Naive thymus-derived CD4-positive, alpha-beta T cell (primary cell): ENCODE measurements at regions of chr4 and their contacts with region 1.

Region 1: GRCh38 chr4:2262143-2262943 is 434 bp upstream of the MXD4 start:
- DNase-seq: peak; percentile 95 to 99 (median 98)
- ATAC-seq: peak; percentile 93
- H3K4me3 ChIP-seq: peak overlapping the region; percentile 69
- H3K4me3 Mint-ChIP-seq: peak overlapping the region; percentile 61 to 85 (median 76)
- H3K27ac ChIP-seq: peak overlapping the region; percentile 95
- H3K27ac Mint-ChIP-seq: peak overlapping the region; percentile 61 to 87 (median 83)
- H3K4me1 ChIP-seq: peaks cover 8 to 23% of the 10 kb centered on the region in 2 donors
- H3K4me1 Mint-ChIP-seq: peaks cover 0 to 11% (median 0%) of the 10 kb centered on the region in 7 donors
- H3K27me3 ChIP-seq: no peaks in the 10 kb centered on the region
- H3K27me3 Mint-ChIP-seq: no peaks in the 10 kb centered on the region

Region 2: DNA sequence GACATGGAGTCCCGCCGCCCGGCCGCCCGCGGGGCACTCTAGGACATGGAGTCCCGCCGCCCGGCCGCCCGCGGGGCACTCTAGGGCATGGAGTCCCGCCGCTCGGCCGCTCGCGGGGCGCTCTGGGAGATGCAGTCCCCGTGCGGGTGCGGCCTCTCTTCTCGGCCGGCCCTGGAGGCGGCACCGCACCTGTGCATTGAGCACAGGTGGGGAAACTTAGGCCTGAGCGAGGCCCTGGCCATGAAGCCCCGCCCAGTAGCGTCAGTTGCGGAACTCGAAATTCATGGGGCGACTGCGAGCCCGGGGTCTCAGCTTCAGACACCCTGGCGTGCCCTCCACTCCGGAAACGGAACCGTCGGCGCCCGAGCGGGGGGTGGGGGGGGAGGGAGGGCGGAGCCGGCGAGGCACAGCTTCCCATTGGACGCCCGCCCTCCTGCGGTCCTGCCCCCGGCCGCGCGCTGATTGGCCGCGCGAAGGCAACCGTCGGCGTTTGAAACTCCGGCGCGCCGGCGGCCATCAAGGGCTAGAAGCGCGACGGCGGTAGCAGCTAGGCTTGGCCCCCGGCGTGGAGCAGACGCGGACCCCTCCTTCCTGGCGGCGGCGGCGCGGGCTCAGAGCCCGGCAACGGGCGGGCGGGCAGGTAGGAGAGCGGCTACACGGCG is 541.2 kb before region 1 on chr4 and contains the starts of genes TACC3 and TMEM129:
- CTCF ChIA-PET with region 1: no interaction called
- POLR2A ChIA-PET with region 1: interaction called, 3 read pairs
- intact Hi-C with region 1: loop called (anchors 2 kb)
- DNase-seq: peak; percentile 79 to 97 (median 95)
- ATAC-seq: peak; percentile 92
- H3K4me3 ChIP-seq: peak within 1 kb of the TSS; percentile 70
- H3K4me3 Mint-ChIP-seq: peak within 1 kb of the TSS; percentile 79 to 97 (median 93)
- H3K27ac ChIP-seq: peak within 1 kb of the TSS; percentile 88
- H3K27ac Mint-ChIP-seq: peak within 1 kb of the TSS; percentile 98 to 100 (median 99)
- H3K4me1 ChIP-seq: peaks cover 45 to 52% of the 10 kb centered on the region in 2 donors
- H3K4me1 Mint-ChIP-seq: peaks cover 25 to 56% (median 52%) of the 10 kb centered on the region in 7 donors
- H3K27me3 ChIP-seq: no peaks in the 10 kb centered on the region
- H3K27me3 Mint-ChIP-seq: no peaks in the 10 kb centered on the region
- total RNA-seq, gene TACC3: 100 to 165 (median 162) TPM
- total RNA-seq, gene TMEM129: 20.0 to 41.1 (median 26.7) TPM

Region 3: DNA sequence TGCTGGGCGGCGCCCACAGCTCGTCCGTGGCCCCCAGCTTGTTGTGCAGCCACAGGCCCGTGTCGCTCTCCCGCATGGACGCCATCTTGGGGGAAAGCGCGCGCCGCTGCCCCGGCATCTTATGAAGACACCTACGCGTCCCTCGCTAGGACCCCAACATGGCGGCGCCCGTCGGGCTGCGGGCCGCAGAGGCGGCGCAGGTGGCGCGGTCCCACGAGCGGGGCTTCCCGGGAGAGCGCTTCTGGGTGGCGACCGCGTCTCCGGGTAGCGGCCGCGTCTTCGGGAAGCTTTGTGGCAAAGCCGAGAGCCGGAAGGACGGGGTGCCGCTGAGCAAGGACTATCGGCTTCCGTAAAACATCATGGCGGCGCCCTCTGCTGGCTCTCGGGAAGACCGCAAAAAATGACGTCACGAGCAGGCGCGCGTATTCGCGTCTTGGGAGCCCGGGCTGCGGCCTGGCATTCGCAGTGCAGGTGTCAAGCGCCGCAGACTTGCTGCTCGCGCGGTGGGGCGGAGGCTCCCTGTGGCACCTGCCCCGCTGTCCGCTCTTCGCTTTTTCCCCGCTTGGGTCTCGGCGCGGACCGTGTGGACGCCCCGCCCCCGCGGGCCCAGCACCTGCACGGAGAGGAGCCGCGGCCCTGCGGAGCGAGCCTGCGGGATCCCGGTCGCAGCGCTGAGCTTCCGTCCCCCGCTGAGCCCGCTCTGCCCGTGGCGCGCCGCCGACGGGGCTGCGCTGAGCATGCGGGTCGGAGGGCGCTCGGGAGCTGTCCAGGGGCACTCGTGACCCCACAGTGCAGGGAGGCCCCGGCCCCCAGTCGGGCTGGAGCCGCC is 253.3 kb before region 1 on chr4 and contains the start of gene NELFA:
- CTCF ChIA-PET with region 1: no interaction called
- POLR2A ChIA-PET with region 1: interaction called, 4 read pairs
- intact Hi-C with region 1: loop called in 1 of 2 experiments (anchors 1 kb)
- DNase-seq: peak; percentile 92 to 98 (median 96)
- ATAC-seq: peak; percentile 93
- H3K4me3 ChIP-seq: peak within 1 kb of the TSS; percentile 96
- H3K4me3 Mint-ChIP-seq: peak within 1 kb of the TSS; percentile 81 to 96 (median 94)
- H3K27ac ChIP-seq: peak within 1 kb of the TSS; percentile 99
- H3K27ac Mint-ChIP-seq: peak within 1 kb of the TSS; percentile 91 to 99 (median 96)
- H3K4me1 ChIP-seq: peaks cover 13 to 24% of the 10 kb centered on the region in 2 donors
- H3K4me1 Mint-ChIP-seq: peaks cover 30 to 38% (median 34%) of the 10 kb centered on the region in 7 donors
- H3K27me3 ChIP-seq: no peaks in the 10 kb centered on the region
- H3K27me3 Mint-ChIP-seq: peaks cover 0 to 20% (median 0%) of the 10 kb centered on the region in 5 donors
- total RNA-seq, gene NELFA: 32.7 to 50.1 (median 43.6) TPM

Region 4: DNA sequence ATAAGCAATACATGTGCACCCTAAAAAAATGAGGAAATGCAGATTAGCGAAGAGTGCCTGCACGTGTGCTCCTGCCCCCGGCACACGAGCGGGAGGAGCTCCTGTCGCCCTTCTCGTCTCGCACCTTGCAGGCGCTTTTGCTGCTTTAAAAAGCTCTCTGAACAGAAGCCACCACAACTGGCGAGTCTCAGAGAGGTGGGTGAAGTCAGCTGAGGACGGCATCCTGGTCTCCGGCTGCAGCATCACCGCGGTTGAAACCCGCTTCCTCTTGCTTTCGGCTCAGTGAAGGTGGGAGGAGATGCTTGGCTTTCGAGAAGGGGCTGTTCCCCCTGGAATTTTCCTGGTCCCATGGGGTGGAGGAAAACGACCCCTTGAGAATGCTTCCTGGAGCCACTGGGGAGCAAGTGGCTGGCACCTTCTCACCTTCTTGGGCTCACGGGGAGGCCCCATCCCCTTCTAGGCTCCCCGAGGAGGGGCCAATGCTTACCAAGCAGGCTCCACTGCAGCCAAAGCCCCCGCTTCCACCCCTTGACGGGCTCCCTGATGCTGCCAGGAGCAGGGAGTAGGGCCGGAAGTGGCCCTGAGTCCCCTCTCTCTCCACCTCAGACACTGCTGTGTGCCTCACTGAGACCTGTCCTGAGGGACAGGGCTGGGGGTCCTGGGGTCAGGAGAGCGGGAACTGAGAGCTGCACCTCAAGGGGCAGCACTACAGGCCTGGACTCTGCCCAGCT is 28.8 kb after region 1 on chr4:
- CTCF ChIA-PET with region 1: interaction called, 3 read pairs
- POLR2A ChIA-PET with region 1: interaction called, 22 read pairs
- intact Hi-C with region 1: loop called (anchors 1 to 2 kb)
- DNase-seq: peak; percentile 39 to 89 (median 84)
- ATAC-seq: peak; percentile 94
- H3K4me3 ChIP-seq: peak overlapping the region; percentile 8
- H3K4me3 Mint-ChIP-seq: peak overlapping the region; percentile 77 to 91 (median 86)
- H3K27ac ChIP-seq: peak overlapping the region; percentile 81
- H3K27ac Mint-ChIP-seq: peak overlapping the region; percentile 84 to 99 (median 99)
- H3K4me1 ChIP-seq: peaks cover 25 to 42% of the 10 kb centered on the region in 2 donors
- H3K4me1 Mint-ChIP-seq: peaks cover 14 to 72% (median 43%) of the 10 kb centered on the region in 7 donors
- H3K27me3 ChIP-seq: no peaks in the 10 kb centered on the region
- H3K27me3 Mint-ChIP-seq: peaks cover 0 to 5% (median 0%) of the 10 kb centered on the region in 5 donors

Region 5: DNA sequence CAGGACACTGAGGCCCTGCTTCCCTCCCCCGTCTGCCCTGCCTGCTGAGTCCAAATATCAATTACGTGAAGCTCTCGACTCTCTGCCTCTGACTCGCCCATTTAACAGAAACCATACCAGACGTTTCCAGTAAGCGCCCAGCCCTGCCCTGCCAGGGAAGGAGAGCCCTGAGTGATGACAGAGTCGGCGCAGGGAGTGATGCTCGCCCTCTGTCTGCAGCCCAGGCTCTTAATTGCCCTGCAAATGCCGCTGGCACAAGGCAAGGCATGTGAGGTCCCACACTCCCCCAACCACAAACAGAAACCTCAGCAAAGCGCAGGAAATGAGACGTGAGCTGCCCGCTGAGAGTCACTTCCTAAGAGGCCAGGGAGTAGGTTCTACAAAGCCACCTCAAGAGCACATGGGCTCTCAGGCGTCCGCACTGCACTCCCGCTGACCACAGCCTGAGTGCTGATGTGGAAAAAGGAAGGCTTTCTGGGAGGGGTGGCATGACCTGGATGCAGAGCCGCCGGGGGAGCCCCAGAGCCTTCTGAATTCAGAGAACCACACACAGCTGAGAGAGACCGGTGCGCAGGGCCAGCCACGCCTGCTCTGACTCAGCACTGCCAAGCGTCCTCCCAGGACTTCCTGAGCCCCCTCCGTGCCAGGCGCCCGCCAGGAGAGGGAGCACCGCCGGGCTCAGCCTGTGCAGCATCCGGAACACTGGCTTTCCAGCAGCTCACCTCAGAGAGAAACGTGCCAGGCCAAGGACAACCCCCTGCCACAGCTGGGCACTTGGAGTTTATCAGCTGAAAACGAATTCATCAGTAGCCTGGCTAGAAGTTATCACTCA is 150.8 kb after region 1 on chr4:
- CTCF ChIA-PET with region 1: interaction called, 5 read pairs
- POLR2A ChIA-PET with region 1: interaction called, 14 read pairs
- intact Hi-C with region 1: loop called (anchors 1 kb)
- DNase-seq: peak; percentile 60 to 89 (median 85)
- ATAC-seq: peak; percentile 84
- H3K4me3 ChIP-seq: peak overlapping the region; percentile 29
- H3K4me3 Mint-ChIP-seq: peak overlapping the region; percentile 74 to 99 (median 84)
- H3K27ac ChIP-seq: peak overlapping the region; percentile 71
- H3K27ac Mint-ChIP-seq: peak overlapping the region; percentile 90 to 100 (median 96)
- H3K4me1 ChIP-seq: peaks cover 41 to 48% of the 10 kb centered on the region in 2 donors
- H3K4me1 Mint-ChIP-seq: peaks cover 35 to 75% (median 67%) of the 10 kb centered on the region in 7 donors
- H3K27me3 ChIP-seq: no peaks in the 10 kb centered on the region
- H3K27me3 Mint-ChIP-seq: peaks cover 0 to 25% (median 0%) of the 10 kb centered on the region in 5 donors

Region 6: DNA sequence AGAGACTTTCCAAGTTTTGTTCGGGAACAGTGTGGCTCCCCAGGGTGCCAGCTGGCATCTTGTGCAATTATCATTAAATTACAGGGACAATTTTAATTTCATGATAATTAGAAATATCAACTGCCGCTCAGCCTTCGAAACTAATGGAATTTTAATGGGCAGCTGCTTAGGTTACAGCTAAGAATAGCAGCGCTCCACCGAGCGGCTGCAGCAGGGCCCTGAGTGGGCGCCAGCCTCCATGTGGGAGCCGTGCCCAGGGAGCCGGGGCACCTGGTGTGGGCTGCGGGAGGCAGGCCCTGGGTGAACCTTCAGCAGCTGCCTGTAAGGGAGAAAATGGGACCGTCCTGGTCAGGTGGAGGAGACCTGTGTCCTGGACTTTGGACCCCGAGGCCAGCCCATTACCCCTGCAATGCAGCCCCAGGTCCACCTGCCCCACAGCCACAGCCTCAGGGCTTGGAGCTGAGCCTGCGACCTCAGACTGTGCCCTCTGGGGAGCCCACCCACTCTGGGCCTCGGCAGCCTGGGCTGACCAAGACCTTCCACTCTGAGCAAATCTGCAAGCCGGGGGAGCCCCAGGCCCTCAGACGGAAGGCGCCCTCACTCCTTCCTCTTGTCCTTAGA is 1007.8 kb after region 1 on chr4:
- CTCF ChIA-PET with region 1: no interaction called
- POLR2A ChIA-PET with region 1: no interaction called
- intact Hi-C with region 1: no loop called
- DNase-seq: peak in 1 of 9 donors; percentile 15
- ATAC-seq: no peak
- H3K4me3 ChIP-seq: no peak overlapping the region
- H3K4me3 Mint-ChIP-seq: no peak overlapping the region
- H3K27ac ChIP-seq: no peak overlapping the region
- H3K27ac Mint-ChIP-seq: no peak overlapping the region
- H3K4me1 ChIP-seq: no peaks in the 10 kb centered on the region
- H3K4me1 Mint-ChIP-seq: peaks cover 0 to 1% (median 0%) of the 10 kb centered on the region in 7 donors
- H3K27me3 ChIP-seq: no peaks in the 10 kb centered on the region
- H3K27me3 Mint-ChIP-seq: peaks cover 0 to 15% (median 0%) of the 10 kb centered on the region in 5 donors